ENCODE measurements at regions of chr10 and their contacts with region 1.

Region 1: GRCh38 chr10:79068562-79069324 is at the start of gene ZMIZ1:
- DNase-seq: peak; percentile 93
- ATAC-seq: peak; percentile 30
- H3K4me3 ChIP-seq: peak within 1 kb of the TSS; percentile 99
- H3K27ac ChIP-seq: peak within 1 kb of the TSS; percentile 99
- H3K4me1 ChIP-seq: peaks cover 22% of the 10 kb centered on the region
- H3K27me3 ChIP-seq: no peaks in the 10 kb centered on the region
- CTCF ChIP-seq: peak; percentile 39
- POLR2A ChIP-seq: peak; percentile 87
- RAD21 ChIP-seq: peak; percentile 31
- total RNA-seq, gene ZMIZ1: 6.6 and 6.7 TPM in 2 replicates

Region 2: GRCh38 chr10:78302989-78303854 is 765.5 kb before region 1 on chr10:
- CTCF ChIA-PET with region 1: no interaction called
- POLR2A ChIA-PET with region 1: no interaction called
- dilution Hi-C with region 1: no loop called
- in situ Hi-C with region 1: no loop called
- intact Hi-C with region 1: loop called (anchors 2 kb)
- DNase-seq: peak; percentile 85
- ATAC-seq: peak; percentile 100
- H3K4me3 ChIP-seq: peak overlapping the region; percentile 62
- H3K27ac ChIP-seq: peak overlapping the region; percentile 69
- H3K4me1 ChIP-seq: peaks cover 3% of the 10 kb centered on the region; the same call in 1 of the 2 replicates
- H3K27me3 ChIP-seq: 0 out of 2 replicates have a peak, but pooled peaks cover 2% of the 10 kb centered on the region
- CTCF ChIP-seq: peak; percentile 75
- POLR2A ChIP-seq: peak; percentile 63; the same call in 1 of the 2 replicates
- RAD21 ChIP-seq: peak; percentile 77

Region 3: DNA sequence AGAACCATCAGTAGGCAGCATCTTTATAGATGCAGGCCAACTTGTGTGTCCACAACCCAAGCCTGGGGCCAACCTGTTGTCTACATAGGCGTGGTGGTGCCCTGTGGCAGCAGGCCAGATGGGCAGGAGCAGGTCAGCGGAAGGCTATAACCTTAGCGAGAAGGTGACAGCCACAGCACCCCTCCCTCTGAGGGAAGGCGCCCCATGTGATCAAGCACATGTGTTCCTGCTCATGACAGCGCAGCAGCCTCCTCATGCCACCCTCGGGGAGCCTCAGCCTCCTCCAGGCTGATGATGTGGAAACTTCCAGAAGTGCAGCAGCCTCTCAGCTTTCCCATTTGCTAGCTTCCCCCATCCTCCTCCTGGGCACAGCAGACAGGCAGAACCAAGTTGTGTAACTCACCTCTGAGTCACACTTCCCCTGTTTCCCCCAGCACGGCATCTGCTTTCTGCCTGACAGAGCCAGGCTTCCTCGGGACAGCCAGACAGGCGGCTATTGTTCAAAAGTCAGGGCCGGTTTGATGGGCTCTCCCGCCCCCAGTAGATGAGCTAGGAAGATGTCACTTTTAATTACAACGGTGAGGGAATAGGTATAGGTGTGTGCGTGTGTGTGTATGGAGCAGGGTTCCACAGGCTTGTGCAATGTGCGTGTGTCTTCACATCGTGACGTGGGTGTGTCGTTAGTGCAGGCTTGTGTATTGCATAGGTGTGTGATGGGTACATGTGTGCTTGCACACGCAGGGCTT is 312.0 kb before region 1 on chr10:
- CTCF ChIA-PET with region 1: no interaction called
- POLR2A ChIA-PET with region 1: no interaction called
- dilution Hi-C with region 1: no loop called
- in situ Hi-C with region 1: no loop called
- intact Hi-C with region 1: loop called (anchors 5 kb)
- DNase-seq: peak; percentile 98
- ATAC-seq: peak; percentile 91
- H3K4me3 ChIP-seq: no peak overlapping the region
- H3K27ac ChIP-seq: peak overlapping the region; percentile 59
- H3K4me1 ChIP-seq: peaks cover 26% of the 10 kb centered on the region
- H3K27me3 ChIP-seq: no peaks in the 10 kb centered on the region
- CTCF ChIP-seq: no peak
- POLR2A ChIP-seq: no peak; the same call in 1 of the 2 replicates
- RAD21 ChIP-seq: peak; percentile 45

Region 4: DNA sequence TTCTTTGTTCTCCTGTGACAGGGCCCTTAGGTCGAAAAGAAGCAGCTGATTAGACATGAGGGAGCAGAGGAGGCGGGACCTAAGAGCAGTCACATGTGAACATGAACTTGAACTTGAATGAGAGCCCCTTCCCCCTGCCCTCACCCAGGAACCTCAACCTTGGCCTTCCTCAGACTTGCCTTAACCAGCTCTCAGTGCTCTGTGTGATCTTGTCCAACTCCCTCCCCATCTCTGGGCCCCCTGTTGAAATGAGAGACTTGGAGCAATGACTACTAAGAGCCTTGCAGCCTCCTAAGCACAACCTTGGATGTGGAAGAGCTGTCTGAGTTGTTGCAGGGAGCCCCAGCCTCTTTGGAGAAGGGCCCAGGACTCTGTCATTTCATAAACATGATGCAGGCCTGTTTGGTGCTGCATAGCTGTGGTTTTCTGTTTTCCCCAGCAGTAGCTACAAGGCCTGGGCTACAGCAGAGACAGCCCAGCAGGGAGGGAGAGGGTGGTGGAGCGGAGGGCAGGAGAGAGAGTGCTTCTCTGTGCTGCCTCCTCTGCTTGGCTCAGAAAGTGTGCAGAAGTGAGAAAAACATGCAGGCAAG is 123.9 kb before region 1 on chr10:
- CTCF ChIA-PET with region 1: no interaction called
- POLR2A ChIA-PET with region 1: no interaction called
- dilution Hi-C with region 1: no loop called
- in situ Hi-C with region 1: no loop called
- intact Hi-C with region 1: loop called (anchors 5 kb)
- DNase-seq: peak; percentile 98
- ATAC-seq: peak; percentile 99
- H3K4me3 ChIP-seq: no peak overlapping the region
- H3K27ac ChIP-seq: peak overlapping the region; percentile 75; the same call in 1 of the 2 replicates
- H3K4me1 ChIP-seq: peaks cover 34% of the 10 kb centered on the region
- H3K27me3 ChIP-seq: peaks cover 3% of the 10 kb centered on the region; the same call in 1 of the 2 replicates
- CTCF ChIP-seq: peak; percentile 27
- POLR2A ChIP-seq: no peak
- RAD21 ChIP-seq: peak; percentile 46

Region 5: GRCh38 chr10:79084012-79084971 is 15.5 kb after region 1 on chr10:
- CTCF ChIA-PET with region 1: no interaction called
- POLR2A ChIA-PET with region 1: no interaction called
- dilution Hi-C with region 1: no loop called
- in situ Hi-C with region 1: no loop called
- intact Hi-C with region 1: no loop called
- DNase-seq: peak; percentile 83
- ATAC-seq: 0 out of 2 replicates have a peak, but pooled peaks have one; percentile 2
- H3K4me3 ChIP-seq: no peak overlapping the region
- H3K27ac ChIP-seq: peak overlapping the region; percentile 78
- H3K4me1 ChIP-seq: peaks cover 69% of the 10 kb centered on the region
- H3K27me3 ChIP-seq: no peaks in the 10 kb centered on the region
- CTCF ChIP-seq: no peak
- POLR2A ChIP-seq: peak; percentile 41; the same call in 1 of the 2 replicates
- RAD21 ChIP-seq: no peak

Region 6: GRCh38 chr10:79101560-79102497 is 33.1 kb after region 1 on chr10:
- CTCF ChIA-PET with region 1: no interaction called
- POLR2A ChIA-PET with region 1: no interaction called
- dilution Hi-C with region 1: no loop called
- in situ Hi-C with region 1: no loop called
- intact Hi-C with region 1: no loop called
- DNase-seq: peak; percentile 66
- ATAC-seq: peak; percentile 73
- H3K4me3 ChIP-seq: no peak overlapping the region
- H3K27ac ChIP-seq: peak overlapping the region; percentile 35
- H3K4me1 ChIP-seq: peaks cover 82% of the 10 kb centered on the region
- H3K27me3 ChIP-seq: no peaks in the 10 kb centered on the region
- CTCF ChIP-seq: no peak
- POLR2A ChIP-seq: no peak
- RAD21 ChIP-seq: no peak; the same call in 1 of the 2 replicates

Region 7: GRCh38 chr10:79112881-79113431 is 44.2 kb after region 1 on chr10:
- CTCF ChIA-PET with region 1: no interaction called
- POLR2A ChIA-PET with region 1: no interaction called
- dilution Hi-C with region 1: no loop called
- in situ Hi-C with region 1: no loop called
- intact Hi-C with region 1: loop called (anchors 5 kb)
- DNase-seq: peak; percentile 92
- ATAC-seq: peak; percentile 76
- H3K4me3 ChIP-seq: no peak overlapping the region
- H3K27ac ChIP-seq: peak overlapping the region; percentile 87
- H3K4me1 ChIP-seq: peaks cover 58% of the 10 kb centered on the region
- H3K27me3 ChIP-seq: no peaks in the 10 kb centered on the region
- CTCF ChIP-seq: no peak
- POLR2A ChIP-seq: peak; percentile 68
- RAD21 ChIP-seq: peak; percentile 31; the same call in 1 of the 2 replicates

Region 8: DNA sequence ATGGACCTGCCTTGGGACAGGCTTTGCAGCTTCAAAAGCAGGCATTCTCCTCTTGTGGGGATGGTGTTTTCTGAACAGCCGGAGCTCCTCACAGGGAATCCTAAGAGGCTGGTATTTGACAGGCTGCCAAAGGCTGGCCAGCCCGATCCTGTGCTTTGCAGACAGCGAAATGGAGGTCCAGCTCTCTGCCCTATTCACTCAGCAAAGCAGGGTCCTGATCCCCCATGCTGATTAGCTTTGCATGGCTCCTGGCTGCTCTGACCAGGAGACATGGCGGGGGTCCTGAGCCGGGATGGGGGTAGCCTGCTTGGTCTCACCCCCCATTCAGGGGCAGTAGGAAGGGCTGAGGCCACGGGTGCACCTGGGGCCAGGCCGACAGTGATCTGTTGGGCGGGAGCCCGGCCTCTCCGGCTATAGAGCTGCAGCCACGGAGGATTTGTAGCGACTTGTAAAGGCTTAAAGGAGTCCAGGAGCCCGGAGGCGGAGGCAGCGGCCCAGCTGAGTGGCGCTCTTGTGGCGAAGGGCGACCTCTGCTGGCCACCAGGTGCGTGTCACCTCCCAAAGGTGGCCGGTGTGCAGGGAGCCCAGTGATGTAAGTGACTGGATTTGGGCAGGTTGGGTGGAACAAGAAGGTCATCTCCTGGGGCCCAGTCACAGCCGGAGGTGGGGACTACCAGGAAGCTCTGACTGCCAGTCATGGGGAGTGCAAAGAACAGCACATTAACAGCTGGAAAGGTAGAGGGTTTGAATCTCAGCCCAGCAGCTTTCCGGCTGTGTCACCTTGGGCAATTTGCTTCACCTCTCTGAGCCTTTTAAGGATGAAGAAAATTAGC is 126.6 kb after region 1 on chr10:
- CTCF ChIA-PET with region 1: interaction called, 4 read pairs
- POLR2A ChIA-PET with region 1: interaction called, 4 read pairs
- dilution Hi-C with region 1: no loop called
- in situ Hi-C with region 1: no loop called
- intact Hi-C with region 1: loop called (anchors 1 kb)
- DNase-seq: peak; percentile 81
- ATAC-seq: peak; percentile 78
- H3K4me3 ChIP-seq: no peak overlapping the region
- H3K27ac ChIP-seq: peak overlapping the region; percentile 76
- H3K4me1 ChIP-seq: peaks cover 35% of the 10 kb centered on the region
- H3K27me3 ChIP-seq: no peaks in the 10 kb centered on the region
- CTCF ChIP-seq: peak; percentile 88
- POLR2A ChIP-seq: peak; percentile 59; the same call in 1 of the 2 replicates
- RAD21 ChIP-seq: peak; percentile 96